ENCODE measurements at regions of chr10 and their contacts with region 1.

Region 1: DNA sequence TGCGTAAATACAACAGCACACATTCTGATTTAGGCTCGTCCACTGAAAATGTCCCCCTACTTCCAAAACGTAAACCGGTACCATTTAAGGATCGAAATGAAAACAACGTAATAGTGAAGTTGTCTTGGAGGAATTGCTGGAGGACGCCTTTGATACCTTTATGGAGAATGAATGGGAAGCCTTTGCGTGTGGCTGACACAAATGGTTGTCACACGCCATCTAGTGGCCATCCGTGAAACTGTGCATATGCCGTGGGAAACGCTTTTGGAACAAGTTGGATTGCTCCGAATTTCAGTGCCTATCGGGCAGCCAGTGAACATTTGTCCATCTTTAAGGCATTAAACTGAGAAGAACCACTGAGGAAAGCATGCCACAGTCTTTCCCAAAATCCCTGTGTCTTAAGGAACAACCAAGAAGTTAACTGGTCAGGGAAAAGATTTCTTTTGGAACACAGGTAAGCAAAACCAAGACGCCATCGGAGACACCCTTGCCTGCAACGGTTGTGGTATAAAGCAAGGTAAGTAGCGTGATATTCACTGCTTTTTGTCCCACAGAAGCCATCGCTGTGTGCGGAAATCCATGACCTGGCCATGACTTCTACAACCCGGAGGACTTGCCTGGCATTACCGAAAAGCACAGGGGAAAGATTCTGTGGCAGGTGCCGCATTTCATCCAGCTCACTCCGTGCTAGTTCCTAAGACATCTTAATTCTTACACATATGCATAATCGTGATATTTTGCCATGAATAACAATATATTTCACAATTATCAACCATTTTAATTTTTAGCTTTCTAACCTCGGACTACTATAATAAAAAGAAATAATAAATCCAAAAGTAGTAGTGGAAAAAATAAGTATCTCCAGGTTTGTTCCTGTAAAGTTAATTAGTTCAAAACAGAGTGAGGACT is 100.6 kb downstream of the FAM204A start:
- DNase-seq: peak; percentile 67
- ATAC-seq: peak in 6 of 8 donors; percentile 43 to 68 (median 60)
- H3K4me3 ChIP-seq: no peak overlapping the region
- H3K27ac ChIP-seq: no peak overlapping the region
- H3K4me1 ChIP-seq: no peaks in the 10 kb centered on the region
- H3K27me3 ChIP-seq: peaks cover under 1 to 93% (median 86%) of the 10 kb centered on the region in 7 donors
- CTCF ChIP-seq: peak; percentile 80 to 96 (median 91)

Region 2: GRCh38 chr10:117216611-117217195 is 1024.8 kb before region 1 on chr10:
- intact Hi-C with region 1: loop called in 6 of 10 experiments (anchors 5 to 10 kb)
- DNase-seq: peak; percentile 34 to 69
- ATAC-seq: peak; percentile 72 to 94 (median 86)
- H3K4me3 ChIP-seq: peak overlapping the region in 9 of 10 donors; percentile 22 to 56 (median 44)
- H3K27ac ChIP-seq: no peak overlapping the region
- H3K4me1 ChIP-seq: peaks cover 0 to 16% (median 9%) of the 10 kb centered on the region in 9 donors
- H3K27me3 ChIP-seq: peaks cover 0 to 73% (median 59%) of the 10 kb centered on the region in 7 donors
- CTCF ChIP-seq: peak; percentile 99 to 100 (median 100)

Region 3: GRCh38 chr10:117496616-117497028 is 744.9 kb before region 1 on chr10:
- intact Hi-C with region 1: loop called (anchors 1 to 5 kb)
- DNase-seq: peak; percentile 65 to 77
- ATAC-seq: peak; percentile 72 to 92 (median 82)
- H3K4me3 ChIP-seq: no peak overlapping the region
- H3K27ac ChIP-seq: no peak overlapping the region
- H3K4me1 ChIP-seq: no peaks in the 10 kb centered on the region
- H3K27me3 ChIP-seq: peaks cover 0 to 46% (median 26%) of the 10 kb centered on the region in 7 donors
- CTCF ChIP-seq: peak; percentile 83 to 98 (median 96)

Region 4: DNA sequence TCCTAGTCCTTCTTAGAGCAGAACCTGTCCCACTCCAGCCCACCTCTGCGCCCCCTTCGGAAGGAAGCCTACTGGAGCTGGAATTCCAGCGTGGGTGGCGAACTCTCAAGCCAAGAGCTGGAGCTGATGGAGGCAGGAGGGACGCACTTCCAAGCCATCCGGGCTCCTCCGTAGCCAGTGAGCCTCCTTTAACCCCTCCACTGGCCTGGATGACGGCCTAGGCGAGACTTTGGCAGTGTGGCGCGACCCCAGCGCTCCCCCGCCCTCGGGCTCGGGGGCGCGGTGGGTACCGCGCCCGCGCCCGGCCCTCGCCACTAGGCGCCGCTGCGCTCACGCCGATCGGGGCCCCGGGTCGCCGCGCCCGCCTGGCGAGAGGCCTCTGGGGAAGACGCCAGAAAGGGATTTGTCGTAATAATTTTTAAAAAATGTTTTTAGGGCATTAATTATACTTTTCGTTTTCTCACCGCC is 704.0 kb before region 1 on chr10:
- intact Hi-C with region 1: loop called (anchors 2 to 10 kb)
- DNase-seq: peak in 1 of 2 donors; percentile 44
- ATAC-seq: peak; percentile 54 to 80 (median 66)
- H3K4me3 ChIP-seq: peak overlapping the region in 5 of 10 donors; percentile 12 to 25 (median 19)
- H3K27ac ChIP-seq: no peak overlapping the region
- H3K4me1 ChIP-seq: peaks cover 4 to 48% (median 29%) of the 10 kb centered on the region in 9 donors
- H3K27me3 ChIP-seq: peaks cover 59 to 100% (median 99%) of the 10 kb centered on the region in 7 donors
- CTCF ChIP-seq: peak; percentile 32 to 83 (median 63)

Region 5: DNA sequence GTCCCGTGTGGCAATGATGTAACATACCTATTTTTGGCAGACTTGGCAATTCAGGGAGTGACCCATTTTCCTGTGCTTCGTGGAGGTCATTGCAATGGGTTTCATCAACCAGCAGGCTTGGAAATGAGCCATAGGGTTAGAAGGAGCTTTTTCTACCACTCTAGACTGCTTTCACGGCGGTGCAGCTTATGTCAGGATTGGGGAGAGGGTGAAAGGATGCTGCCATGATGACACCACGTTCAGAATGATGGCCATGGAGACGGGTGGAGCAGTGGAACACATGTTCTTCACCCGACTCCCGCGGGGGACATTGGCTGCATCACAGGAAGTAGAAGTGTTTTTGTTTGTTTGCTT is 478.7 kb before region 1 on chr10:
- intact Hi-C with region 1: no loop called
- DNase-seq: no peak
- ATAC-seq: no peak
- H3K4me3 ChIP-seq: no peak overlapping the region
- H3K27ac ChIP-seq: no peak overlapping the region
- H3K4me1 ChIP-seq: no peaks in the 10 kb centered on the region
- H3K27me3 ChIP-seq: peaks cover 0 to 38% (median 17%) of the 10 kb centered on the region in 7 donors
- CTCF ChIP-seq: no peak

Region 6: GRCh38 chr10:117860823-117861222 is 380.7 kb before region 1 on chr10:
- intact Hi-C with region 1: loop called in 1 of 10 experiments (anchors 10 kb)
- DNase-seq: no peak
- ATAC-seq: no peak
- H3K4me3 ChIP-seq: no peak overlapping the region
- H3K27ac ChIP-seq: no peak overlapping the region
- H3K4me1 ChIP-seq: no peaks in the 10 kb centered on the region
- H3K27me3 ChIP-seq: peaks cover 0 to 49% (median 7%) of the 10 kb centered on the region in 7 donors
- CTCF ChIP-seq: peak in 5 of 9 donors; percentile 11 to 25 (median 24)

Measured in heart right ventricle (tissue), 16 donors.